Activated CD4-positive, alpha-beta memory T cell treated with anti-CD3 and anti-CD28 coated beads for 36 hours (primary cell): ENCODE measurements at regions of chr4 and their contacts with region 1.

Region 1: GRCh38 chr4:40699648-40700047 is 50.1 kb upstream of the NSUN7 start:
- DNase-seq: peak; percentile 21
- H3K4me3 Mint-ChIP-seq: no peak overlapping the region
- H3K27ac Mint-ChIP-seq: peak overlapping the region; percentile 38
- H3K4me1 Mint-ChIP-seq: peaks cover 31% of the 10 kb centered on the region
- H3K27me3 Mint-ChIP-seq: no peaks in the 10 kb centered on the region

Region 2: GRCh38 chr4:40629401-40630334 is 70.0 kb before region 1 on chr4 and contains the start of gene RBM47:
- CTCF ChIA-PET with region 1: no interaction called
- POLR2A ChIA-PET with region 1: no interaction called
- intact Hi-C with region 1: loop called (anchors 5 kb)
- DNase-seq: peak; percentile 44
- H3K4me3 Mint-ChIP-seq: peak within 1 kb of the TSS; percentile 70
- H3K27ac Mint-ChIP-seq: no peak within 1 kb of the TSS
- H3K4me1 Mint-ChIP-seq: peaks cover 28% of the 10 kb centered on the region
- H3K27me3 Mint-ChIP-seq: peaks cover 43% of the 10 kb centered on the region
- total RNA-seq, gene RBM47: 1.7 to 2.6 TPM

Region 3: DNA sequence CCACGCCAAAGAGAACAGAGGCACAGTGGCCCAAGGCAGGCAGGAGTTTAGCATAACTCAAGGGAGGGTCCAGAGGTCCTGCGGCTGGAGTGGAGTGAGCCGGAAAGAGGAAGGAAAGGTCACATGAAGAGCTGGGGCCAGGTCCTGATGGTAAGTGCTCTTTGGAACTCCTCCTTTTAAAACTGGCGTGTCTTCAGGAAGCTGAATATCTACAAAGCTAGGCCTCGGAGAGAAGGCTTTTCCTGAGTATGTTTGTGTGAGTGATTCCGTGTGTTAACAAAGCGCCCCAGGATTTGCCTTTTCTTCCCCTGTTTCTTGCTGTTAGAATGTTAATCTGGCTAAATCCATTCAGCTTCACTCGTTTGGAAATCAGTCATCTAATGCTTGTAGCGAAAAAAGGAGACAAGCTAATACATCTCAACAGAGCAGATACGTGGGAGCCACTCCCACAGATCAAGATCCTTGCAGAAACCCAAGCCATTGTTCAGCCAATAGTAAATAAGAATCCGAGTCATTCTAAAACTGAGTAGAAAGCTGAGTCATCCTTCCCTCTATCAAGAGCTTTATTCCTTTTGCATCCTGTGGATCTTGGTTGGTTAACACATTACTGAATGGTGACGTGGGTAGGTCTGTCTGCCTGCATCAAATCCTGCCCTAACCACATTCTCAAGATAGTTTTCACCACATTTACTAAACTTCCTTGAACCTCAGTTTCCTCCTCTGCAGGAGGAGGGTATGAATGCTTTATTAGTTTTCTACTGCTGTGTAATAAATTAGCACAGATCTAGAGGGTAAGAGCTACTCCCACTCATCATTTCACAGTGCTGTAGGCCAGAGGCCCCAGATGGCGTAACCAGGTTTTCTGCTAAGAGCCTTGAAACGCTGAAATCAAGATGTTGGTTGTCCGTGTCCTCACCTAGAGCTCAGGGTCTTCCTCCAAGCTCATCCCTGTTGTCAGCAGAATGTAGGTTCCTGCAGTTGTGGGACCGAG is 26.8 kb before region 1 on chr4:
- CTCF ChIA-PET with region 1: interaction called, 11 read pairs
- POLR2A ChIA-PET with region 1: interaction called, 15 read pairs
- intact Hi-C with region 1: loop called (anchors 1 kb)
- DNase-seq: peak; percentile 71
- H3K4me3 Mint-ChIP-seq: peak overlapping the region; percentile 63
- H3K27ac Mint-ChIP-seq: peak overlapping the region; percentile 92
- H3K4me1 Mint-ChIP-seq: peaks cover 50% of the 10 kb centered on the region
- H3K27me3 Mint-ChIP-seq: no peaks in the 10 kb centered on the region

Region 4: GRCh38 chr4:40763228-40763716 is 63.6 kb after region 1 on chr4:
- CTCF ChIA-PET with region 1: no interaction called
- POLR2A ChIA-PET with region 1: no interaction called
- intact Hi-C with region 1: loop called (anchors 1 kb)
- DNase-seq: peak; percentile 76
- H3K4me3 Mint-ChIP-seq: no peak overlapping the region
- H3K27ac Mint-ChIP-seq: peak overlapping the region; percentile 16
- H3K4me1 Mint-ChIP-seq: peaks cover 11% of the 10 kb centered on the region
- H3K27me3 Mint-ChIP-seq: peaks cover 4% of the 10 kb centered on the region